Testis (tissue), 5 donors: ENCODE measurements at regions of chr12 and their contacts with region 1.

Region 1: DNA sequence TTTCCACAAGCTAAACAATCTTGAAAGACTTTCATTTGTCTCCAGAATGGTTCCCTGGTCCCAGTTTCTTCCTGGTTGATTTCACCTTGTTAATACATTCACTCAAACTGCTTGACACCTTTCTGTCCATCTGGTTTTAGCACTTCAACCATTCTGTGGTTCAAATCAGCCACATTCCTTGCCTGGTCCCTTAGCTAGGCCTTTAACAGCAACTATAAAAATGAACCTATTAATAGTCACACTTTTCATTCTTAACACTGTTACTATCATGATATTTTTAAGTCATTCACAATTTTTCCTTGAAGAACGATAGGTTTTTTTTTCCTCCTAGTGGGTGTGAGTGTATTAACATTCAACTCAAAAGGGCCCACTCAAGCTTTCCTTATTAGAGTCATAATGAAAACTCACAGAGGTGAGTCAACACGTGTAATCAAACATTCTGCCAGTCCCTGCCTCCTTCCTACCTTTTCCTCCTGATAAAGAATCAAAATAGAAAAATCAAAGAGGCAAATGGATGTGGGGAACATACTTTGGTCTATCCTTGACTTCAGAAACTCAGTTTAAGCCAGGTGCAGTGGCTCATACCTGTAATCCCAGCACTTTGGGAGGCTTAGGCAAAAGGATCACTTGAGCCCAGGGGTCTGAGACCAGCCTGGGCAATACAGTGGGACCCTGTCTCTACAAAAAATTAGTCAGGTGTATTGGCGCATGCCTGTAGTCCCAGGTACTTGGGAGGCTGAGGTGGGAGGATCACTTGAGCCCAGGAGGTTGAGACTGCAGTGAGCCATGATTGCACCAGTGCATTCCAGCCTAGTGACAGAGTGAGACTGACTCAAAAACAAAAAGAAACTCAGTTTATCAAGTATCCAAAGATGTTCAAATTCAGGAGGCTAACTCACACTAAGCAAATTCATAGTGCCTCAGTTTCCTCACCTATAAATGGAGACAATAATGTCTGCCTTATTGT is 34.5 kb upstream of the CCNT1 start:
- DNase-seq: no peak
- H3K4me3 ChIP-seq: no peak overlapping the region
- H3K27ac ChIP-seq: no peak overlapping the region
- H3K4me1 ChIP-seq: no peaks in the 10 kb centered on the region
- H3K27me3 ChIP-seq: no peaks in the 10 kb centered on the region
- CTCF ChIP-seq: no peak
- POLR2A ChIP-seq: no peak

Region 2: GRCh38 chr12:48580831-48581230 is 170.2 kb before region 1 on chr12:
- intact Hi-C with region 1: no loop called
- DNase-seq: no peak
- H3K4me3 ChIP-seq: no peak overlapping the region
- H3K27ac ChIP-seq: no peak overlapping the region
- H3K4me1 ChIP-seq: no peaks in the 10 kb centered on the region
- H3K27me3 ChIP-seq: no peaks in the 10 kb centered on the region
- CTCF ChIP-seq: no peak
- POLR2A ChIP-seq: no peak

Region 3: DNA sequence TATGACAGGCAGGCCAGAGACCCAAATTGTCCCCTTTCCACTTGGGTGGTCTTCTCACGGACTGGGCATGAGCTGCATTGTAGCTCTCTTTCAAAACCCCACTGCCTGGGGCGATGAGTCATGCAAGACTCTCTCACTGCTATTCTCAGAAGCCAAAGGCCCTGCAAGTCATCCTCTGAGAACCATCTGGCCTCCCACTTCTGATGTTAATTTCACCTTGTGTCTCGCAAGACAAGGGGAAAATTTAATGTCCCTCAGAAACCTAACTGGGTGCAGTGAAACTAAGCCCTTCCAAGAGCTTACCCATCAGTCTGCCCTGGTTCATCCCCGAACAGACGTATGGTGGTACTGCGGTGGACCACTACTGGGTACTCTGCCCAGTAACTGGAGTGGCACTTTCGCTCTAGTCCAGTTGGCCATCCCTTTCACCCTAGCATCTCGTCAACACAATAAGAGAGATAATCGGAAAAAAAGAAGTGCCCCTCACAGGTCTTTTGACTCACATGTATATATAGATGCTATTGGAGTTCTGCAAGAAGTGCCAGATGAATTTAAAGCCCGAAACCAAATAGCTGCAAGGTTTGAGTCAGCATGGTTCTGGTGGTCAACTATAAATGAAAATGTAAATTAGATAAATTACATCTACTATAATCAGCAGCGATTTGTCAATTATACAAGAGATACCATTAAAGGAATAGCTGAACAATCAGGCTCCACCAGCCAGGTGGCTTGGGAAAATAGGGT is 149.9 kb before region 1 on chr12:
- intact Hi-C with region 1: no loop called
- DNase-seq: no peak
- H3K4me3 ChIP-seq: no peak overlapping the region
- H3K27ac ChIP-seq: no peak overlapping the region
- H3K4me1 ChIP-seq: no peaks in the 10 kb centered on the region
- H3K27me3 ChIP-seq: no peaks in the 10 kb centered on the region
- CTCF ChIP-seq: no peak
- POLR2A ChIP-seq: no peak

Region 4: DNA sequence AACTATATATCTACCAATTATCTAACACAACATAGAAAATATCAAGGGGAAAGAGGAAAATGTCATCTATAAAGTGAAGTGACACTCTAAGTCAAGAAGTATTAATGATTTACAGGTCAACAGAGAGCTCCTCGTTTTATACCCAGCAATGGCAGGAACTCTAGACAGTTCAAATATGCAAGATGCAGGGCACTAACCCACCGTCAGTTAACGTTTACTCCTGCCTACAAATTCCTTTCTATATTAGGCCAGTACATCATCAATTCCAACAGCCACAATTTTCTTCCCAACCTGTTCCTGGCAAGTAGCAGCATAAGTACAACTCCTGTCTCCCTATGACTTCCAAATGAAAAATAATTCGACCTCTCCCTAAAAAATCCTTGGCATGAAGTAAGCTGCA is 60.1 kb before region 1 on chr12:
- intact Hi-C with region 1: no loop called
- DNase-seq: no peak
- H3K4me3 ChIP-seq: no peak overlapping the region
- H3K27ac ChIP-seq: no peak overlapping the region
- H3K4me1 ChIP-seq: no peaks in the 10 kb centered on the region
- H3K27me3 ChIP-seq: no peaks in the 10 kb centered on the region
- CTCF ChIP-seq: no peak
- POLR2A ChIP-seq: no peak

Region 5: GRCh38 chr12:48795480-48796455 is 44.7 kb after region 1 on chr12:
- intact Hi-C with region 1: loop called (anchors 5 kb)
- DNase-seq: peak; percentile 85
- H3K4me3 ChIP-seq: no peak overlapping the region
- H3K27ac ChIP-seq: no peak overlapping the region
- H3K4me1 ChIP-seq: no peaks in the 10 kb centered on the region
- H3K27me3 ChIP-seq: no peaks in the 10 kb centered on the region
- CTCF ChIP-seq: peak; percentile 97 to 98 (median 97)
- POLR2A ChIP-seq: no peak

Region 6: GRCh38 chr12:48936379-48936979 is 185.4 kb after region 1 on chr12:
- intact Hi-C with region 1: no loop called
- DNase-seq: peak; percentile 83
- H3K4me3 ChIP-seq: no peak overlapping the region
- H3K27ac ChIP-seq: no peak overlapping the region
- H3K4me1 ChIP-seq: no peaks in the 10 kb centered on the region
- H3K27me3 ChIP-seq: no peaks in the 10 kb centered on the region
- CTCF ChIP-seq: peak; percentile 42 to 93 (median 70)
- POLR2A ChIP-seq: no peak